ENCODE measurements at regions of chr14 and their contacts with region 1.

Region 1: GRCh38 chr14:73759714-73760597 is 45.8 kb upstream of the PNMA1 start:
- DNase-seq: peak; percentile 97
- H3K4me3 Mint-ChIP-seq: peak overlapping the region; percentile 89
- H3K27ac Mint-ChIP-seq: peak overlapping the region; percentile 99
- H3K4me1 Mint-ChIP-seq: peaks cover 74% of the 10 kb centered on the region
- H3K27me3 Mint-ChIP-seq: no peaks in the 10 kb centered on the region

Region 2: GRCh38 chr14:73058224-73058921 is 701.6 kb before region 1 on chr14 and contains the start of gene RBM25:
- CTCF ChIA-PET with region 1: no interaction called
- intact Hi-C with region 1: loop called (anchors 2 kb)
- DNase-seq: peak; percentile 97
- H3K4me3 Mint-ChIP-seq: no peak within 1 kb of the TSS
- H3K27ac Mint-ChIP-seq: no peak within 1 kb of the TSS
- H3K4me1 Mint-ChIP-seq: peaks cover 42% of the 10 kb centered on the region
- H3K27me3 Mint-ChIP-seq: no peaks in the 10 kb centered on the region
- total RNA-seq, gene RBM25: 86.3 to 93.6 TPM

Region 3: GRCh38 chr14:73696466-73697400 is 63.2 kb before region 1 on chr14:
- CTCF ChIA-PET with region 1: no interaction called
- intact Hi-C with region 1: loop called (anchors 2 kb)
- DNase-seq: no peak
- H3K4me3 Mint-ChIP-seq: peak overlapping the region; percentile 29
- H3K27ac Mint-ChIP-seq: peak overlapping the region; percentile 86
- H3K4me1 Mint-ChIP-seq: peaks cover 44% of the 10 kb centered on the region
- H3K27me3 Mint-ChIP-seq: no peaks in the 10 kb centered on the region

Region 4: GRCh38 chr14:73741386-73741875 is 18.5 kb before region 1 on chr14:
- CTCF ChIA-PET with region 1: interaction called, 112 read pairs
- intact Hi-C with region 1: loop called (anchors 1 kb)
- DNase-seq: peak; percentile 88
- H3K4me3 Mint-ChIP-seq: peak overlapping the region; percentile 43
- H3K27ac Mint-ChIP-seq: peak overlapping the region; percentile 84
- H3K4me1 Mint-ChIP-seq: peaks cover 63% of the 10 kb centered on the region
- H3K27me3 Mint-ChIP-seq: no peaks in the 10 kb centered on the region

Region 5: GRCh38 chr14:73785873-73786695 is 26.1 kb after region 1 on chr14:
- CTCF ChIA-PET with region 1: interaction called, 27 read pairs
- intact Hi-C with region 1: loop called (anchors 1 kb)
- DNase-seq: peak; percentile 75
- H3K4me3 Mint-ChIP-seq: peak overlapping the region; percentile 90
- H3K27ac Mint-ChIP-seq: peak overlapping the region; percentile 91
- H3K4me1 Mint-ChIP-seq: peaks cover 56% of the 10 kb centered on the region
- H3K27me3 Mint-ChIP-seq: no peaks in the 10 kb centered on the region

Region 6: DNA sequence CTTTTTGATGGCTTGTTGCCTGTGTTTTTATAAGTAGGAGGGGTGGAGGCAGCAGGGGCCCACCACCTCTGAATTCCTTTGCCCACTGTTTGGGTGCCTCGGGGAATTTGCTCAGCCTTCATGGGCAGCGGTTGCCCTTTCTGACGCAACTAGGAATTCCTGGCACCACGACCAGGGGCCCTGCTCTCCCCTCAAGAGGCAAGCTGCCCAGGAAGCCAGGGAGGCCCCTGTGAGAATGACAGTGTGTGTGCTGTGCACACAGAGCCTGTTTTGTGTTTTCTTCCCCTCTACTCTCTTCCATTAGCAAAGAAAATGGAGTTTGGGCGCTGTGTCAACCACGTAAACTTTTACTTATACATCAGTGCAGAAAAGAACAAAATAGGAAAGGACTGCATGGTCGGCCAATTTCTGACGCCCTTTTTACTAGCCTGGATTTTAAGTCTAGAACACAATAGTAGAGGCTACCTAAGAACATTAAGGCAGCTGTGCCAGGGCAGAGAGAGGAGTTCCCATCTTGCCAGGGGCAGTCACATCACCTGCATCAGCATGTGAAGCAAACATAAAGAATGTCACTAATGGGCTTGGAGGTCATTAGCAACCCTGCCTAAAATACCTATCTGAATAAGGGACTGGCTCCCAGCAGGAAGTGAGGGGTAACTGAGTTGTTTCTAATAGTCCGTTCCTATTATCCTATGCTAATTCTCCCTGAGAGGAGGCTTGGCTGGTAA is 73.7 kb after region 1 on chr14:
- CTCF ChIA-PET with region 1: no interaction called
- intact Hi-C with region 1: no loop called
- DNase-seq: no peak
- H3K4me3 Mint-ChIP-seq: no peak overlapping the region
- H3K27ac Mint-ChIP-seq: no peak overlapping the region
- H3K4me1 Mint-ChIP-seq: peaks cover 16% of the 10 kb centered on the region
- H3K27me3 Mint-ChIP-seq: no peaks in the 10 kb centered on the region

Region 7: GRCh38 chr14:74018586-74019407 is 258.8 kb after region 1 on chr14 and contains the starts of genes BBOF1 and ENTPD5:
- CTCF ChIA-PET with region 1: no interaction called
- intact Hi-C with region 1: loop called (anchors 5 kb)
- DNase-seq: peak; percentile 80
- H3K4me3 Mint-ChIP-seq: peak within 1 kb of the TSS; percentile 86
- H3K27ac Mint-ChIP-seq: peak within 1 kb of the TSS; percentile 90
- H3K4me1 Mint-ChIP-seq: peaks cover 13% of the 10 kb centered on the region
- H3K27me3 Mint-ChIP-seq: no peaks in the 10 kb centered on the region
- total RNA-seq, gene BBOF1: 1.3 to 1.7 TPM
- total RNA-seq, gene ENTPD5: 7.3 to 9.6 TPM

Measured in activated naive CD4-positive, alpha-beta T cell treated with anti-CD3 and anti-CD28 coated beads for 36 hours (primary cell).